PC-9 (cell line): ENCODE measurements at regions of chr6 and their contacts with region 1.

Region 1: DNA sequence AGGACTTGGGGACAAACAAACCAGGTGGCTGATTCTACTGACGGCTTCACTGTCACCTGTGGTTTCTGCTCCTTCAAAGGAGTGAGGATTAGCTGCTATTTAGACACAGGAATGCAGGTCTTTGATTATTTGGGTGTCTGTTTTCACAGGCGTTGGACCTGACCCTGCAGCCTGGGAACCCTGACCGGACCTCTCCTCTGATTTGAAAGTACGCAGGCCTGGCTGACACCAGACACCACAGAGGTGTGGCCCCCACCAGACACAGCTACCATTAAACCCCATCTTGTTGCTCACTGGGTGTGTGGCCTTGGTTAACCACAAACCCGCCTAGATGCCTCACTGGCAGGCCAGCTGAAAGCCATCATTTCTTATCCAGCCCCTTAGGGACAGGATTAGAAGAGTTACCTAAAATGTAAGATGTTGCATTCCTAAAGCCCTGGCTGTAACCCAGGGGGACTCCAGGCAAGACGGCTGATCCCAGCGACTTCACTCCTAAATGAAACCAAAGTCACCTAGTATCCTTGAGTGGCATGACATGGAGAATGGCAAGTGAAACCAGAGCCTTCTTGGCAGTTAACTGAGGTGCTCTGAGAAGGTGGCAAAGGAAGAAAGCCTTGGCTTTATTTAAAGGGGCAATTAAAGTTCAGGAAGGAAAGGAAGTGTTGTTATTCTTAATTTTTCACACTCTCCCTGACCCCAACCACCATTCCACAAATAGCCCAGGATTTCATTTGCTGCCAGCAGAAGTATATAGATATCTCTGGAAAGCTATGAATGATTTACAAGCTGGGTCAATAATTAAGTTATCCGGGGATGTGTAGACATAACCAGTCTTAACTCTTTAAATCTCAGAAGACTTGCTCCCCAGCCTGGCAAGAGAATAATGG is 169.9 kb downstream of the QRSL1 start:
- DNase-seq: peak; percentile 94 to 100
- H3K4me3 ChIP-seq: peak overlapping the region; percentile 42; the same call in 1 of the 2 replicates
- H3K27ac ChIP-seq: peak overlapping the region; percentile 95
- H3K4me1 ChIP-seq: peaks cover 44% of the 10 kb centered on the region
- H3K27me3 ChIP-seq: no peaks in the 10 kb centered on the region
- CTCF ChIP-seq: no peak

Region 2: DNA sequence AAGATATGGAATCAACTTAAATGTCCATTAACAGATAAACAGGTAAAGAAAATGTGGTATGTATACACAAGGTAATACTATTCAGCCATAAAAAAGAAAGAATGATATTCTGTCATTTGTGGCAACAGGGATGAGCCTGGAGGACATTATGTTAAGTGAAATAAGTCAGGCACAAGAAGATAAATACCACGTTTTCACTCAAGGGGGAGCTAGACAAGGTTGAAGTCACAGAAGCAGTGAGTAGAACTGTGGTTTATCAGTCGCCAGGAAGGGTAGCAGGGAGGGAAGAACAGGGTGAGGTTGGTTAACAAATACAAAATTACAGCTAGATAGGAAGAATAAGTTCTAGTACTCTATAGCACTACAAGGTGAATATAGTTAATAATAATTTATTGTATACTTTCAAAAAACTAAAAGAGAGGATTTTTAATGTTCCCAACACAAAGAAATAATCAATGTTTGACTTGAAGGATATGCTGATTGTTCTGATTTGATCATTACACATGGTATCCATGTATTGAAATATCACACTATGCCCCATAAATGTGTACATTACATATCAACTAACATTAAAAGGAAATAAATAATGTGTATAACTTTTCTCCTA is 191.1 kb before region 1 on chr6:
- CTCF ChIA-PET with region 1: interaction called, 4 read pairs
- POLR2A ChIA-PET with region 1: interaction called, 3 read pairs
- intact Hi-C with region 1: loop called (anchors 2 kb)
- DNase-seq: peak; percentile 10 to 47
- H3K4me3 ChIP-seq: no peak overlapping the region
- H3K27ac ChIP-seq: no peak overlapping the region
- H3K4me1 ChIP-seq: no peaks in the 10 kb centered on the region
- H3K27me3 ChIP-seq: no peaks in the 10 kb centered on the region
- CTCF ChIP-seq: peak; percentile 89

Region 3: DNA sequence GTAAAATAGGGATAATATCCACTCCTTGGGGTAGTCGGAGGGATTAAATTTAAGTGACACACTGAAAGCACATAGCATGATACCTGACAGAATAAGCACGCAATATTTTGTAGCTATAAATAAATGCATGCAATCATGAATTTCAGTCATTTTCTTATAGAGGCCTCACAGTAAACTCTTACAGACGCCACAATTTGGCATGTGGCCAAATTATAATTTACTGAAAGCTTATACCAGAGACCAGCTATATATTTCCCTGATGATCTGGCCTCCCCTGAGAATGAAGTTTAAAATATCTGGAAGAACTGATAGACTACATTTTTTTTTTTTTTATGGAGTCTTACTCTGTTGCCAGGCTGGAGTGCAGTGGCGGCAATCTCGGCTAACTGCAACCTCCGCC is 129.0 kb before region 1 on chr6:
- CTCF ChIA-PET with region 1: no interaction called
- POLR2A ChIA-PET with region 1: interaction called, 11 read pairs
- intact Hi-C with region 1: no loop called
- DNase-seq: no peak
- H3K4me3 ChIP-seq: no peak overlapping the region
- H3K27ac ChIP-seq: no peak overlapping the region
- H3K4me1 ChIP-seq: no peaks in the 10 kb centered on the region
- H3K27me3 ChIP-seq: no peaks in the 10 kb centered on the region
- CTCF ChIP-seq: no peak

Region 4: DNA sequence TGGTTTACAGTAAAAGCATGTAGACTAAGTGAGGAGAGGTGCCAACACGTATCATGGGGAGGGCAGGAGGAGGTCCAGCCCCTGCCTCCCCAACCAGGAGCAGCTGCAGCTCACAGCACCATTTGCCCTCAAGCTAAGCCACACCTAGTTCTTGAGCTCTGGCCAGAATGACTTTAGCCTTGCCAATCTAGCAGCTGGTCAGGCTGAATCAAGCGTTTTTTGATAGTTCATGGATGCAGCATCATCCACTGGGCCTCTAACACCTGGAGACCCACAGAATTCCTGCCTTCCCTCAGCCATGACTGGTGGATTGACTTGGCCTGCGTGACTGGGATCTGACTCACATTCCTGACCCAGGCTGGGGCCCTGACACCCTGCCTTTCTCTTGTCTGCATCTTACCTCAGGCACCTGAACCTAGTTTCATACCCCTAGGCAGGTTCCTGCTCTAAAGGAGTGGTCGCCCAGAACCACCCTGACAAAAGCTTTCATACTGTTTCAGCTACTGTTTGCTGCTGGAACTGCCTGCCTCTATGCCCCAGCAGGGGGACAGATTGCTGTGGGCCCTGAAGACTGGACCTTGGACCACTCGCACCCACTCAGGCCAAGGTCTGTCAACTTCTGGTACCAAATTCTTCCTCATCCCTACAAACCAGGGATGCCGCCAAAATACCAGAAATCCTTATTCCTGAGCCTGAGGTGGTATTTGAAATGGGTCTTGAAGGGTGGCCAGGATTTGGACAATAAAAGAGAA is 47.6 kb before region 1 on chr6:
- CTCF ChIA-PET with region 1: no interaction called
- POLR2A ChIA-PET with region 1: interaction called, 11 read pairs
- intact Hi-C with region 1: loop called (anchors 1 kb)
- DNase-seq: peak; percentile 85 to 95
- H3K4me3 ChIP-seq: no peak overlapping the region
- H3K27ac ChIP-seq: peak overlapping the region; percentile 73
- H3K4me1 ChIP-seq: peaks cover 44% of the 10 kb centered on the region
- H3K27me3 ChIP-seq: no peaks in the 10 kb centered on the region
- CTCF ChIP-seq: no peak

Region 5: DNA sequence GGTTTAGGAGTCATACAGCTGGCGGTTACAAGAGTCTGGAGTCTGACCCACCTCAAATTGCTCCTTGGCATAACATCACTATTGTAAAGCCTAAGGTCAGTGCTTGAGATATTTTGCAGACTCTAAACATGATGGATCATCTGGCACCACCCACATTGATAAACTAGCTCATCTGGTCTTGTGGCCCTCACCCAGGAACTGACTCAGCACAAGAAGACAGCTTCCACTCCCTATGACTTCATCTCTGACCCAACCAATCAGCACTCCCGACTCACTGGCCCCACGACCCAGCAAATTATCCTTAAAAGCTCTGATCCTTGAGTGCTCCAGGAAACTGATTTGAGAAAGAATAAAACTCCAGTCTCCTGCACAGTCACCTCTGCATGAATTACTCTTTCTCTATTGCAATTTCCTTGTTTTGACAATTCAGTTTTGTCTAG is 59.4 kb after region 1 on chr6:
- CTCF ChIA-PET with region 1: no interaction called
- POLR2A ChIA-PET with region 1: no interaction called
- intact Hi-C with region 1: loop called (anchors 5 kb)
- DNase-seq: peak; percentile 48 to 88
- H3K4me3 ChIP-seq: no peak overlapping the region
- H3K27ac ChIP-seq: peak overlapping the region; percentile 63
- H3K4me1 ChIP-seq: peaks cover 19% of the 10 kb centered on the region
- H3K27me3 ChIP-seq: no peaks in the 10 kb centered on the region
- CTCF ChIP-seq: no peak

Region 6: GRCh38 chr6:106913676-106914280 is 114.5 kb after region 1 on chr6:
- CTCF ChIA-PET with region 1: no interaction called
- POLR2A ChIA-PET with region 1: no interaction called
- intact Hi-C with region 1: loop called (anchors 1 kb)
- DNase-seq: peak; percentile 43 to 98
- H3K4me3 ChIP-seq: no peak overlapping the region
- H3K27ac ChIP-seq: peak overlapping the region; percentile 98
- H3K4me1 ChIP-seq: peaks cover 46% of the 10 kb centered on the region
- H3K27me3 ChIP-seq: no peaks in the 10 kb centered on the region
- CTCF ChIP-seq: no peak